ENCODE measurements at regions of chr9 and their contacts with region 1.

Region 1: DNA sequence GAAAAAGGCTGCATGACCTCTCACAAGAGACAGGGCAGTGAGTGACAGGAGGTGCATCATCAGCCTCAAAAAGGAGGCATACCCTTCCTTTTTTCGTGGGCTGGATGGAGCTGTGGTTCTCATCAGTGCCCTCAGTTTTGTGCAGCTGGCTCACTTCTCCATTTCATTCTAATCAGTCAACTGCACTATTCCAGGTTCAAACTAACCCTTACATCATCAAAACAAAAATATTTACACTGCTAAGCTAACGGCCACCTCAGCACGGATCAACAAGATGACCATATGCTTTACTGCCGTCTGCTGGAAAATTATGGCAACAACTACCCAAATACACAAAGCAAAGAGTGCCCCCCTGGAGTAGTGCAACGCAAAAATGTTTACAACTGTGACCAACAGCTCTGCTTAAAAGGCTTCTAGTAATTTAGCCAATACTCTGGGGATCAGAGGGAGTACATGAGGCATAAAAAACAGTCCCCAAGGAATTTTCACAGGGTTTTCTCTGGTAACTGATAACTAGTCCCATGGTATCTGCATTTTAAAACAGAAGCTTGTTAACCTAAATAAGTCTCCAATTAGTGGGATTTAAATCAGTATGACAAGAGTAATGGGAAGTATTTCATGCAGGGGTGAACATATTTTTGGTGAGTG is 10.8 kb downstream of the KCNV2 start:
- DNase-seq: peak; percentile 18
- H3K4me3 Mint-ChIP-seq: no peak overlapping the region
- H3K27ac Mint-ChIP-seq: no peak overlapping the region
- H3K4me1 Mint-ChIP-seq: no peaks in the 10 kb centered on the region
- H3K27me3 Mint-ChIP-seq: no peaks in the 10 kb centered on the region

Region 2: DNA sequence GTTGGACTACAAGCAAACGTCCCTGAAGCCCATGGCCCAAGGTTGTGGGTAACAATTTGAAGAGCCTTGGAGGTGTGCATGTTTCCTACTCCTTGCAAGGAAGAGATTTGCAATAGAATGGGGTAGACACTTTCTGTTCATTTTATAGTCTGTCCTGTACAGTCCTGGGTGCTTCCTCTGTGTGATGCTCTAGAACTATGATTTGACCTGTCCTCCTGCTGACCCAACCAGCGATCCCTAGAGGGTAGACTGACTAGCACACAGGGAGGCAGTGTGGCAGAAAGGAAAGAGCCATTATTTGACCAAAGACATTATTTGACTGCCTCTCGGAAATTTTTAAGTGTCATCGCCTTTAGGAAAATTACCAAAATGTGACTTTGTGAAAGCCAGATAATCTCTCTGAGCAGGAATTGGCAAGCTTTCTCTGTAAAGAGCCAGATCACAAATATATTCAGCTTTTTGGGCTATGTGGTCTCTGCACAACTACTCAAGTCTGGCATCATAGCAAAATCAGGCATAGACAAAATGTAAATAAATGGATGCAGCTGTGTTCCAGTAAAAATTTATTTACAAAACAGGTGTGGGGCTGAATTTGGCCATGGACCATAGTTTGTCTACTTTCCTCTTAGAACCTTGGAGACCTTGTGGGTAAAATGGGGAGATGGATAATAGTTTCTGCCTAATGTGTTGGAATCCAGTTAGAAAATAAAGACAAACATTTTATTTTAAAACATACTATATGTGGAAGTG is 1571.1 kb before region 1 on chr9:
- CTCF ChIA-PET with region 1: interaction called, 10 read pairs
- intact Hi-C with region 1: no loop called
- DNase-seq: no peak
- H3K4me3 Mint-ChIP-seq: no peak overlapping the region
- H3K27ac Mint-ChIP-seq: no peak overlapping the region
- H3K4me1 Mint-ChIP-seq: no peaks in the 10 kb centered on the region
- H3K27me3 Mint-ChIP-seq: peaks cover 2% of the 10 kb centered on the region

Region 3: GRCh38 chr9:2132484-2133082 is 595.5 kb before region 1 on chr9:
- CTCF ChIA-PET with region 1: interaction called, 3 read pairs
- intact Hi-C with region 1: loop called (anchors 5 kb)
- DNase-seq: no peak
- H3K4me3 Mint-ChIP-seq: no peak overlapping the region
- H3K27ac Mint-ChIP-seq: no peak overlapping the region
- H3K4me1 Mint-ChIP-seq: peaks cover 10% of the 10 kb centered on the region
- H3K27me3 Mint-ChIP-seq: no peaks in the 10 kb centered on the region

Region 4: DNA sequence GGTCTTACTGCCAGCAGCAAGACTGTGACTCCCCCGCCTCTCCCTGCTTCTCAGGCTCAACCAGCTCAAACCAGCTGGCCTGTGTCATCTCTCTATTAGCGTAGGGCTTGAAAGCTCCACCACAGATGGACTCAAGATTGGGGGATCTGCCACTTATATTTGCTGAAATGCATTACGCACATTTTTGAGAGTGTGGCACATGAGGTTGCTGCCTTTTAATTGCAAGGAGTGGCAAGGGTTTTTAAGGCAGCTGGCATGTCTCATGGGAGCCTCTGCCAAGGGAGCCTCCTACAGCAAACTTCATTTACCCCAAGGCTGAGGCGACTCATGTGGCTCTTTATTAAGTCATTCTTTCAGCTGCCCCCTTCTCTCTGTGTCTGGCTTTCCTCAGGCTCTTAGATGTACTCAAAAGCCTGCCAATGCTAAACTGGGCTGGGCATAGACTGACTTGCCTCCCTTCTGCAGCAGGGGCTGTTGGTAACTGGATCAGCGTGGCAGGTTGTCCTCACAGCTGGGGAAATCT is 493.7 kb before region 1 on chr9:
- CTCF ChIA-PET with region 1: no interaction called
- intact Hi-C with region 1: loop called (anchors 10 kb)
- DNase-seq: no peak
- H3K4me3 Mint-ChIP-seq: no peak overlapping the region
- H3K27ac Mint-ChIP-seq: no peak overlapping the region
- H3K4me1 Mint-ChIP-seq: no peaks in the 10 kb centered on the region
- H3K27me3 Mint-ChIP-seq: peaks cover 4% of the 10 kb centered on the region

Measured in activated naive CD4-positive, alpha-beta T cell treated with anti-CD3 and anti-CD28 coated beads for 36 hours (primary cell).